Left lung (tissue), 14 donors: ENCODE measurements at regions of chr11 and their contacts with region 1.

Region 1: GRCh38 chr11:36292311-36292722 is 3.1 kb upstream of the COMMD9 start:
- DNase-seq: peak in 1 of 4 donors; percentile 24
- ATAC-seq: peak; percentile 51
- H3K4me3 ChIP-seq: no peak overlapping the region
- H3K27ac ChIP-seq: no peak overlapping the region
- H3K4me1 ChIP-seq: peaks cover 10 to 25% of the 10 kb centered on the region in 2 donors
- H3K27me3 ChIP-seq: no peaks in the 10 kb centered on the region
- CTCF ChIP-seq: peak; percentile 46 to 50

Region 2: DNA sequence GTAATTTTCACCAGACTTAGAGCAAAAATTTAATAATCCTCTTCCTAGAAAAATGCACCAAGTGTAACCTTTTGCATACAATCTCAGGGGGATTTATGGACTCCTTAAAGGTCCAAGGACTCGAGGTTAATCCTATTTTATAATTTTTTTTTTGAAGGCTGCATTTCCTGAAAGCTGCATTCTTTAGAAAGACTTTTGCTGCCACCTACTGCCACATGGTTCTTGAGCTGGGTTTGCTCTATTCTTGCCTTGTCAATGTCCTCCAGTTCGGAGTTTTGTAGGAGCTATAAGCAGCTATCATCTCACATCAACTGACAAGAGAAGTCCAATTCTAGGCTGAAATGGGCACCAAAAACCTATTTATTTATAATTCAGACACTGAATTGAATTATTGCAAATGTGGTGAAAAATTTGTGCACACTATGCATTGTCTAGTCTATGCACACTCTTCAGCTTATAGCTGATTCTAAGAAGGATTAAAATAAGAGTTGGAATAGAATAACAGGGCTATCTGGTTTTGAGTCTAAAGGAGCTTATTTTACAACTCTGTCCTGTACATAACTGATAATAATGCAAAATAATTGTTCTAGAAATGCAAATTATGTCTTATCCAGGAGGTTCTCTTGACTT is 186.5 kb after region 1 on chr11:
- intact Hi-C with region 1: loop called in 1 of 2 experiments (anchors 5 kb)
- DNase-seq: peak in 1 of 4 donors; percentile 69
- ATAC-seq: peak; percentile 81
- H3K4me3 ChIP-seq: no peak overlapping the region
- H3K27ac ChIP-seq: no peak overlapping the region
- H3K4me1 ChIP-seq: peaks cover 0 to 3% of the 10 kb centered on the region in 2 donors
- H3K27me3 ChIP-seq: no peaks in the 10 kb centered on the region
- CTCF ChIP-seq: peak; percentile 39 to 49